CD8-positive, alpha-beta T cell (primary cell): ENCODE measurements at regions of chr6 and their contacts with region 1.

Region 1: DNA sequence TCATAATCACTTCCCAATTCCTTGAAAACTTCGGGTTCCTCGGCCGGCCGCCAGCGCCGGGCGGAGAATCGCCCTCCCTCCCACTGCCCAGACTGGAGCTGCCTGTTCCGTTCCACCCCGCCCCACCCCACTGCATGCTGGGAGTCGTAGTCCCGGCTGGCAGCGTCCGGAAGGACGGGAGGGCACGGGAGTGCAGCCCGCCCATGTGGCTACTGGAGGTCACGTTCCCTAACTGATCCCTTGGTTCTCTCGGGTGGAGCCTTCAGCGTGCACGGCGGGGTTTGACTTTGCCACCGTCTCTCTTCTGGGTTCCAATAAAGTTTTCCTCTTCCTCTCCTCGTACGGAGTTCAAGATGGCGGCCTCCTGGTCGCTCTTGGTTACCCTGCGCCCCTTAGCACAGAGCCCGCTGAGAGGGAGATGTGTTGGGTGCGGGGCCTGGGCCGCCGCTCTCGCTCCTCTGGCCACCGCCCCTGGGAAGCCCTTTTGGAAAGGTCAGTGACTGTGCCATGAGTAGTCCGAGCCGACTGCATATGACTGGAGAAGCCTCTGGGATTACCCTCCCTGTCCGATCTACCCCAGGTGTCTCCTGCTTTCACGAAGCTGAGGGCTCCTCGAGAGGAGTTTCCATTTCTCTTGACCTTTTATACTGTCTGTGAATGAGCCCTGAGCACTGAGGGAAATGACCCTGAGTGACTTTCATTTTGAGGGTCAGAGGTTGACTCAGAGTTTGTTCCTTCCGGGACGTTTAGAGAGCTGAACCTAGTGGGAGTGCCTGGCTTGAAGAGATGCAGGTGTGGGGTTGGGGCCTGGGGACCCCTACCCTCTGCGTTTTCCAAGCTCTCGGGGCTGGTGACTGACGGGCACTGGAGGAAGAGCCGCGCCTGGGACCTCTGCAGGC is at the start of gene AFG1L:
- DNase-seq: peak; percentile 72 to 92 (median 86)
- ATAC-seq: peak; percentile 92
- H3K4me3 ChIP-seq: peak within 1 kb of the TSS; percentile 94 to 96
- H3K4me3 Mint-ChIP-seq: peak within 1 kb of the TSS; percentile 89
- H3K27ac ChIP-seq: peak within 1 kb of the TSS; percentile 94 to 95
- H3K27ac Mint-ChIP-seq: peak within 1 kb of the TSS; percentile 97
- H3K4me1 ChIP-seq: peaks cover 13% of the 10 kb centered on the region
- H3K4me1 Mint-ChIP-seq: peaks cover 26% of the 10 kb centered on the region
- H3K27me3 ChIP-seq: no peaks in the 10 kb centered on the region
- H3K27me3 Mint-ChIP-seq: no peaks in the 10 kb centered on the region
- CTCF ChIP-seq: no peak
- total RNA-seq, gene AFG1L: 3.3 to 4.0 TPM

Region 2: GRCh38 chr6:107021446-107022185 is 1273.4 kb before region 1 on chr6:
- CTCF ChIA-PET with region 1: no interaction called
- POLR2A ChIA-PET with region 1: no interaction called
- intact Hi-C with region 1: loop called (anchors 10 kb)
- DNase-seq: no peak
- ATAC-seq: no peak
- H3K4me3 ChIP-seq: no peak overlapping the region
- H3K4me3 Mint-ChIP-seq: no peak overlapping the region
- H3K27ac ChIP-seq: no peak overlapping the region
- H3K27ac Mint-ChIP-seq: no peak overlapping the region
- H3K4me1 ChIP-seq: no peaks in the 10 kb centered on the region
- H3K4me1 Mint-ChIP-seq: no peaks in the 10 kb centered on the region
- H3K27me3 ChIP-seq: no peaks in the 10 kb centered on the region
- H3K27me3 Mint-ChIP-seq: peaks cover 2% of the 10 kb centered on the region
- CTCF ChIP-seq: no peak

Region 3: GRCh38 chr6:108074359-108075144 is 220.4 kb before region 1 on chr6 and contains the start of gene OSTM1:
- CTCF ChIA-PET with region 1: no interaction called
- POLR2A ChIA-PET with region 1: no interaction called
- intact Hi-C with region 1: loop called (anchors 1 to 5 kb)
- DNase-seq: peak; percentile 89 to 97 (median 94)
- ATAC-seq: peak; percentile 96
- H3K4me3 ChIP-seq: peak within 1 kb of the TSS; percentile 98 to 99
- H3K4me3 Mint-ChIP-seq: peak within 1 kb of the TSS; percentile 89
- H3K27ac ChIP-seq: peak within 1 kb of the TSS; percentile 85 to 88
- H3K27ac Mint-ChIP-seq: peak within 1 kb of the TSS; percentile 88
- H3K4me1 ChIP-seq: peaks cover 19% of the 10 kb centered on the region
- H3K4me1 Mint-ChIP-seq: peaks cover 29% of the 10 kb centered on the region
- H3K27me3 ChIP-seq: no peaks in the 10 kb centered on the region
- H3K27me3 Mint-ChIP-seq: peaks cover 2% of the 10 kb centered on the region
- CTCF ChIP-seq: no peak
- total RNA-seq, gene OSTM1: 20.0 to 25.0 TPM

Region 4: DNA sequence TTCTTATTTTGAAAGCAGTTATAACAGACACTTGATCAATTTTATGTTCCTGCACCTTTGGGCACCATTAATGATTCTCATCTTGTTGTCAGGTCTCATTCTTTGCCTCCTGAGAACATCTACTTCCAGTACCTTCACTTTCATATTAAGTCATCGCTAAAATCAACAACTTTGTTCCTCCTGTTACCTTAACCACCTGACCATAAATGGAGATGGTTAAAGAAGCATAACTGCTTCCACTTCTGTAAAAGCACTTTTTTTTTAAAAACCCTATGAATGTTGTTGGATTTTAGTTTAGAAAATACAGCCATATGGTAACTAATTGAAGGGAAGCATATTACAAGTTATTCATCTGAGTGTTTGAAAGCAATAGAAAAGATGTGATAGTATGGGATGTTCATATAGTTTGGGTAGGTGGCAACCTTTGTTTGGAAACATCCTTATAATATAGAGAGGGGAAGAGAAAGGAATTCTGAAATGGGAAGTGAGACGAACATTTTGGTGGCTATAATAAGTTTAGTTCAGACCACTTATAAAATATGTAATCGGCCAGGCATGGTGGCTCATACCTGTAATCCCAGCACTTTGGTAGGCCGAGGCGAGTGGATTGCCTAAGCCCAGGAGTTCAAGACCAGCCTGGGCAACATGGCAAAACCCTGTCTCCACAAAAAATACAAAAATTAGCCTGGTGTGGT is 53.8 kb after region 1 on chr6:
- CTCF ChIA-PET with region 1: no interaction called
- POLR2A ChIA-PET with region 1: no interaction called
- intact Hi-C with region 1: no loop called
- DNase-seq: peak in 1 of 9 experiments; percentile 7
- ATAC-seq: no peak
- H3K4me3 ChIP-seq: no peak overlapping the region
- H3K4me3 Mint-ChIP-seq: no peak overlapping the region
- H3K27ac ChIP-seq: no peak overlapping the region
- H3K27ac Mint-ChIP-seq: no peak overlapping the region
- H3K4me1 ChIP-seq: no peaks in the 10 kb centered on the region
- H3K4me1 Mint-ChIP-seq: peaks cover 5% of the 10 kb centered on the region
- H3K27me3 ChIP-seq: no peaks in the 10 kb centered on the region
- H3K27me3 Mint-ChIP-seq: no peaks in the 10 kb centered on the region
- CTCF ChIP-seq: no peak